Calu3 (cell line): ENCODE measurements at regions of chrX and their contacts with region 1.

Region 1: DNA sequence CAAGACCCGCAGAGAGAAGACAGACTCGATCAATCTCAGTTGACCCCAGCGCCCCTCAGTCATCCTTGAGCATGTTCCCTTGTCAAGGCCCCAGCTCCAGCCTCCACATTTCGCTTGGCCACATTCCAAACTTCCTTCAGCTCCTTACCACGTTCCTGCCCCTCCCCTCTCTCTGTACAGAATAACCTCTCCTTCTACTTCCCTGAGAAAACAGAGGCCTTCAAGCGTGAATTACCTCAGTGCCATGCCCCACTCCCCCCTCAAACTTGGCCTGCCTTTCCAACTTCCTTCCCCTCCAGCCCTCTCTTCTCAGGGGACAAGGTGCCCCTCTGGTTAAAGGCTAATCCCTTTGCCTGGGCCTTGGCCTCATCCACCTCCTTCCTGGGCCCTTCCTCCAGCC is 3.2 kb upstream of the RIPPLY1 start:
- DNase-seq: peak; percentile 29
- H3K4me3 Mint-ChIP-seq: no peak overlapping the region
- H3K27ac Mint-ChIP-seq: peak overlapping the region; percentile 37
- H3K4me1 Mint-ChIP-seq: peaks cover 41% of the 10 kb centered on the region
- H3K27me3 Mint-ChIP-seq: no peaks in the 10 kb centered on the region
- CTCF ChIP-seq: no peak

Region 2: GRCh38 chrX:106939566-106939965 is 33.2 kb after region 1 on chrX:
- CTCF ChIA-PET with region 1: interaction called, 11 read pairs
- intact Hi-C with region 1: no loop called
- DNase-seq: no peak
- H3K4me3 Mint-ChIP-seq: no peak overlapping the region
- H3K27ac Mint-ChIP-seq: no peak overlapping the region
- H3K4me1 Mint-ChIP-seq: no peaks in the 10 kb centered on the region
- H3K27me3 Mint-ChIP-seq: no peaks in the 10 kb centered on the region
- CTCF ChIP-seq: no peak

Region 3: DNA sequence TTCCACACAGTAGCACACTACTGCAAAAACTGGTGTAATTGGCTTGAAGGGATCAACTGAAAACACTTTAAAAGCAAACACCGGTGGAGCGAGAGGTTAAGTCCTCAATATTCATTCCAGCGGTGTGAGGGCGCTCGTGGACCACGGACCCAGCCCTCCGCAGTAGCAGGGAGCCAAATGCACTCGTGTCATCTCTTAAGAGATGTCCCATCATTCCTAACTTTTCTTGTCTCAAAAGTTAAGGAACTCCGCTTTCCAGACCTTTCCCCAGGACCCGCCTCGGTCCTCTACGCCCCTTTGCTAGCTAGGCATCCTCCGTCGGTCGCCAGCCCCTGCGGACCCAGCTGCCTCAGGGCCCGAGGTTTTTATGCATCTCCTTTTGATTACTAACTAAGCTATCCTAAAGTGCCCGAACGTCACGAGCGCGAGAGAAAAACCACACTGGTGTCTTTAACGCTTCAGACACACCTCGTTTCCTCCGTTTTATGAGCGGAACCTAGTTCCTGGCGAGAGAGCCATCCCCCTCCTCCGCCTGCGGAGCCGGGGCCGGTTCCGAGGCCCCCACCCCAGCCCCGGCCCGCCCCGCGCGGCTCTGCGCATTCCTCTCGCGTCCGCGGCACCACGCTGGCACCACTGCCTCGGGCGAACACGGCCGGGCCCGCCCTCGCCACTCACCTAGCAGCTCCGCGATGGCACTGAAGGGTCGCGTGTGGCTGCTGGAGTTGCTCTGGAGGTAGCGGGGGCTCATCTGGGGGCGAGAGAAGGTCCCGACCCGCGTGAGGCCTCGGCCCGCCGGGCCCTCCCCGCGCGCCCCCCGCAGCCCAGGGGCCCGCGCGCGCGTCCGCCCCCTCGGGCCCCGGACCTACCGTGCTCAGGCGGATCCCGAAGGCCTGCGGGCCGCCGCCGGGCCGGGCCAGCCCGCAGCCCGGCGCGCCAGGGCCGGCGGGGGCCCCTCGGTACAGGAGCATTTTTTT is 92.9 kb after region 1 on chrX:
- CTCF ChIA-PET with region 1: no interaction called
- intact Hi-C with region 1: no loop called
- DNase-seq: peak; percentile 61
- H3K4me3 Mint-ChIP-seq: peak overlapping the region; percentile 77
- H3K27ac Mint-ChIP-seq: no peak overlapping the region
- H3K4me1 Mint-ChIP-seq: peaks cover 27% of the 10 kb centered on the region
- H3K27me3 Mint-ChIP-seq: no peaks in the 10 kb centered on the region
- CTCF ChIP-seq: no peak